Esophagus muscularis mucosa (tissue), 4 donors: ENCODE measurements at regions of chrX and their contacts with region 1.

Region 1: DNA sequence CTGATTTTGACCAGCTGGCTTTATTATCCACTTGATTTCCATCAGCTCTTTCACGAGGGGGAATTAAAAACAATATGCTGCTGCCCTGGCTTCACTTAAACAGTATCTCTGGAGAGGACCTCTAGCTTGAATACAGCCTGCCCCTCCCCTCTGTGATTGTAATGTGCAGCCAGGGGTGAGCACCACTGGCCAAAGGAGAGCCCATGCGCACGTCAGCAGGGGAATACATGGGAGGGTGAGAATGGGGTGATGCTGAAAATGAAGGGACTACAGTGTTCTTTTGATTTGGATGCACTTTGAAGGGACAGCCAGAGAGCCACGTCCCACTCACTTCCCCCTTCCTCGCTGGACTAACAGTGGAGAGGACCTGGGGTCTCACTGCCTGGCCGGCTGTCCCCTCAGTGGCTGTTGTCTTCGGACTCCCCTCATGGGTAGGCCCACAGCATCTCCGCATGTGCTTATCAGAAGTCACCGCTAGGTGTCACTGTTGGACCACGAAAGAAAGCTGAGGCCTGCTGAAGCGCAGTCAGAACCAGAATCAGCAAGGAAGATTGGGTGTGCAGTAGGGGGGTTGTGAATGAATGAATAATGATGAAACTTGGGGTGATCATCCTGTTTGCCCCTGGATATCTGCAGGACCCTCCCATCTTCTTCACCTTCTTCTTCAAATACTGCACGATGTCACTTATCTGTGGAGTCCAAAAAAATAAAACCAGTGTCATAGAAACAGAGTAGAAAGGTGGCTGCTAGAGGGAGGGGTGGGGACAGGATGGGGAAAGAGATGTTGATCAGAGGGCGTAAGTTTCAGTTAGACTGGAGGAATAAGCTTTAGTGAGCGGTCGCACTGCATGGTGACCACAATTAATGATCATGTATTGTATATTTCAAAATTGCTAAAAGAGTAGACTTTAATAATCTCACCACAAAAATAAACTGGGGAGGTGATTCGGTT is 32.8 kb downstream of the CLCN4 start:
- DNase-seq: peak; percentile 92
- H3K4me3 ChIP-seq: no peak overlapping the region
- H3K27ac ChIP-seq: no peak overlapping the region
- H3K4me1 ChIP-seq: peaks cover 0 to 14% (median 9%) of the 10 kb centered on the region in 4 donors
- H3K27me3 ChIP-seq: no peaks in the 10 kb centered on the region
- CTCF ChIP-seq: peak; percentile 63 to 80 (median 73)
- EP300 ChIP-seq: no peak
- POLR2A ChIP-seq: no peak

Region 2: DNA sequence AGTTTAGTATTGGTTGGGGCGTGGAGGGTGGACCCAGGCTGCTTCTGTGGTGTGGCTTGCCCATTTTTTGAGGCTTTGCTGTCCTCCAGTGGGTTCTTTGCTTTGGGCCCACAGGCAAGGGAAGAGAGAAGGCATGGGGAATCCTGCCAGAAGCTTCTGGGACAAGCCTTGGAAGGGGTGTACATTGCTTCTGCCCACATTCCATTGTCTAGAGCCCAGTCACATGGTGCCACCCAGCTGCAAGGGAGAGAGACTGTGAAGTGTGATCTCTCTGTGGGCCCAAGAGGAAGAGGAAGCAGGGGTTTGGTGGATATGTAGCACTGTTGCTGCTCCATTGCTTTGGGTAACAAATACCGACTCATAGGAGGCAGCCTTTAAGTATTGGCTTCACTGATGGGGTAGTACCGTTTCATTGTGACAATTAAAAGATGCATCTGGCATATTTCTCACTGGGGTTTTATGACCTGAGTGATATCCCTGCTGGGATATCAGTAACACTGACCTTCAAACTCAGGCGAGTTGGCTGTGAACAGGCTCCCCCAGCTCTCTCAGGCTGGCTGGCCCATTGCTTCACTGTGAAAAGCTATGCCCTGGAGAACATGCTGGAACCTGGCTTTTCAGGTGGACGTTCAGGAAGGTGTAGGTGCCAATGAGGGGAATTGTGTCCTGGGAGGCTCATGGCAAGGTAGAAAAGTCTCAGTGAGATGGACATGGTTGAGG is 136.5 kb before region 1 on chrX:
- intact Hi-C with region 1: no loop called
- DNase-seq: no peak
- H3K4me3 ChIP-seq: no peak overlapping the region
- H3K27ac ChIP-seq: peak overlapping the region; percentile 14 to 59 (median 47)
- H3K4me1 ChIP-seq: peaks cover 31 to 54% (median 53%) of the 10 kb centered on the region in 4 donors
- H3K27me3 ChIP-seq: no peaks in the 10 kb centered on the region
- CTCF ChIP-seq: no peak
- EP300 ChIP-seq: no peak
- POLR2A ChIP-seq: no peak

Region 3: DNA sequence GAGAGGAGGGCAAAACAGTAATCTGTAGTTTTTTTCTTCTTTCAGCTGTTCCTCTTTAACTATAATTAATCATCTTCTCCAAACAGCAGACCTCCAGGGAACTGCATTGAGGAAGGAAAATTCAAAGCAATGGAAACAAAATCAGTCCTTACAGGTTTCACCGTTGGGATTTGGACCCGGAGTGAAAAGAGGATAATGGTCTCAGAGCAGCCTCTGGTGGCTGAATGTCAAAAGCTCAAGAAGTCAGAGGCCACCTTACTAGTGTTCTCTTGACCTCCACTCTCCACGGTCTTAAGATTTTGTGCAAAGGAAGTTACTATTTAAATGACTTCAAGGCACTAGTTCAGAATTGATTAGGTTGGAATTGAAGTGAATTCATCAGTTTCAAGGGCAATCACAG is 446.7 kb after region 1 on chrX:
- intact Hi-C with region 1: loop called (anchors 2 kb)
- DNase-seq: no peak
- H3K4me3 ChIP-seq: peak overlapping the region in 1 of 4 donors; percentile 20
- H3K27ac ChIP-seq: peak overlapping the region; percentile 36 to 55 (median 48)
- H3K4me1 ChIP-seq: peaks cover 0 to 27% (median 19%) of the 10 kb centered on the region in 4 donors
- H3K27me3 ChIP-seq: no peaks in the 10 kb centered on the region
- CTCF ChIP-seq: peak; percentile 44 to 63 (median 58)
- EP300 ChIP-seq: no peak
- POLR2A ChIP-seq: no peak

Region 4: DNA sequence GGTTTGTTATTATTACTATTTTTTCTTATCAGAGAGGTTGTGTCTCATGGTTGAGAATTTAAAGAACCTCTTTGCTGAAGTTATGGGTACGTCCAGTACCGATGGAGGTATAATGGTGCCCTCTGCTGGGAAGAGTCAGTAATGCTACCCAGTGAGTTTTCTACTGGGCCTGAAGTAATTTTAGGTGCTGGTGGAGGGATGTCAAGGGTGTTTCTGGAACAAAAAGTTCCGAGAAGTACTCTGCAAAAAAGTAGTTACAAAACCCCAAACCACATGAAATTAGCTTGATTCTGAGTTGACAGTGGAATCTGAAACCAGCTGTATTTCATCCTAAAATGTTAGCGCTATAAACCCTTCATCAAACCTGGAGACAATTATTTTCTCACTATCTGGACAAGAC is 533.3 kb after region 1 on chrX:
- intact Hi-C with region 1: loop called (anchors 2 kb)
- DNase-seq: no peak
- H3K4me3 ChIP-seq: no peak overlapping the region
- H3K27ac ChIP-seq: peak overlapping the region in 2 of 4 donors; percentile 35 to 58
- H3K4me1 ChIP-seq: peaks cover 0 to 8% (median 0%) of the 10 kb centered on the region in 4 donors
- H3K27me3 ChIP-seq: no peaks in the 10 kb centered on the region
- CTCF ChIP-seq: peak; percentile 71 to 78 (median 71)
- EP300 ChIP-seq: no peak
- POLR2A ChIP-seq: no peak

Region 5: DNA sequence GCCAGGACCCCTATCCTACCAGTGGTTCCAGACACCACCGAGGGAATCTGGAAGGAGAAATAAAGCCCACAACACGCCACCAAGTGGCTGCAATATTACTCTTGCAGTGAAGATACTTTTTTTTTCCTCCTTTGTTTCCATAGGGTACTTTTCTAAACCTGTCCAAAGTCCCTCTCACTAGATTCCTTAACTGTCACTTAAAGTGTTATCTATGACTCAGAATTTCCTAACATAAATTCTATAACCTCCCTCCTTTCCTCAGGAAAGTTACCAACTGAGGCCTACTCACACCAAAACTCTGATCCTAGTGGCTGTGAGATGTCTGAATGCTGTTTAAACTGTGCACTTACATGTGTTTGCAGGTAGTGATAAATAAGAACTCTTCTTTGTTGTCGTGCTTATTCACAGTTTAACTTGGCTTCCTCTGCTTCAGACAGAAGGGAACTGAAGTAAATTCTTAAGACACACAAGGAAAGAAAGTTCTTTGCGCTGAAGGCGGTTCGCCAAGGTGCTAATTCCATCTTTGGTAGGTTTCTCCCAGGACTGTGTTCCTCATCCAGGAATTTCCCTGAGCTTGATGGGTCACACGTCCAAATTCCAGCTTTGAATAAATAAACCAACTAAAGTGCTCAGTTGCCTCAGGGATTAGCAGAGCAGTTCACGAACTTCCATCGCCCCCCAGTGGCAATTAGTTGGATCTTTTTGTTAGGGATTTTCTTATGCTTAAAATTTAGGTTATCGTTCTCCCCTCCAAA is 910.9 kb after region 1 on chrX:
- intact Hi-C with region 1: loop called (anchors 10 kb)
- DNase-seq: no peak
- H3K4me3 ChIP-seq: no peak overlapping the region
- H3K27ac ChIP-seq: peak overlapping the region; percentile 69 to 75 (median 72)
- H3K4me1 ChIP-seq: peaks cover 0 to 27% (median 14%) of the 10 kb centered on the region in 4 donors
- H3K27me3 ChIP-seq: no peaks in the 10 kb centered on the region
- CTCF ChIP-seq: peak; percentile 46 to 52 (median 50)
- EP300 ChIP-seq: no peak
- POLR2A ChIP-seq: no peak

Region 6: GRCh38 chrX:11129534-11130105 is 940.0 kb after region 1 on chrX:
- intact Hi-C with region 1: loop called (anchors 2 kb)
- DNase-seq: no peak
- H3K4me3 ChIP-seq: no peak overlapping the region
- H3K27ac ChIP-seq: no peak overlapping the region
- H3K4me1 ChIP-seq: no peaks in the 10 kb centered on the region
- H3K27me3 ChIP-seq: no peaks in the 10 kb centered on the region
- CTCF ChIP-seq: no peak
- EP300 ChIP-seq: no peak
- POLR2A ChIP-seq: no peak

Region 7: DNA sequence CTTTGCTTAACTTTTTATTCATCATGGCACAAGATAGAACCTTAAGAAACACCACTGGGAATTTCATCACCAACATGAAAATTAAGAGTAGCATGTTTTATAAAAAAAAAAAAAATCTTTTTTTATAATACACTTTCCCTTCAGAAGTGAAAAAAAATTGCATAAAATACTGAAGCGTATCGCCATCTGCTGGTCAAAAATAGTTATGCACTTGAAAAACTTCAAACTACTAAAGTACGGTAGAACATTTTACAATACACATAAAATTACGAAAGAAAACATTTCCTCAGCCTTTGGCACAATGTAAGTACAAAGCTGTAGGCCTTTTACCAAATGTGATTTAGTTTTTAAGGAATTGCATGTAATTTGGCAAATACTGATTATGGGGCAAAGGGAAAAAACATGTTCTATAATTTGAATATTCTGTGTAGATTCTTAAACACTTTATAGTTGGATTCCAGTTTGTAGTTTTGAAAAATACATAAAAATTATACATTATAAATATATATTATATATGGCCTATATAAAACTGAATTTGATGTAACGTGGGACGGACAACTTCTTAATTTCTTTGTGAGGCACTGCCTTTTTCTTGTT is 948.0 kb after region 1 on chrX:
- intact Hi-C with region 1: loop called (anchors 2 kb)
- DNase-seq: no peak
- H3K4me3 ChIP-seq: no peak overlapping the region
- H3K27ac ChIP-seq: no peak overlapping the region
- H3K4me1 ChIP-seq: peaks cover 0 to 8% (median 0%) of the 10 kb centered on the region in 4 donors
- H3K27me3 ChIP-seq: no peaks in the 10 kb centered on the region
- CTCF ChIP-seq: peak; percentile 66 to 84 (median 69)
- EP300 ChIP-seq: no peak
- POLR2A ChIP-seq: no peak